HEK293 (cell line): ENCODE measurements at regions of chr5 and their contacts with region 1.

Region 1: GRCh38 chr5:134041570-134042411 is 37.0 kb upstream of the VDAC1 start:
- H3K4me3 ChIP-seq: no peak overlapping the region
- H3K27ac ChIP-seq: no peak overlapping the region
- H3K4me1 ChIP-seq: no peaks in the 10 kb centered on the region
- CTCF ChIP-seq: no peak

Region 2: GRCh38 chr5:134053840-134054338 is 12.1 kb after region 1 on chr5:
- CTCF ChIA-PET with region 1: interaction called, 20 read pairs
- POLR2A ChIA-PET with region 1: no interaction called
- H3K4me3 ChIP-seq: no peak overlapping the region
- H3K27ac ChIP-seq: no peak overlapping the region
- H3K4me1 ChIP-seq: no peaks in the 10 kb centered on the region
- CTCF ChIP-seq: no peak

Region 3: DNA sequence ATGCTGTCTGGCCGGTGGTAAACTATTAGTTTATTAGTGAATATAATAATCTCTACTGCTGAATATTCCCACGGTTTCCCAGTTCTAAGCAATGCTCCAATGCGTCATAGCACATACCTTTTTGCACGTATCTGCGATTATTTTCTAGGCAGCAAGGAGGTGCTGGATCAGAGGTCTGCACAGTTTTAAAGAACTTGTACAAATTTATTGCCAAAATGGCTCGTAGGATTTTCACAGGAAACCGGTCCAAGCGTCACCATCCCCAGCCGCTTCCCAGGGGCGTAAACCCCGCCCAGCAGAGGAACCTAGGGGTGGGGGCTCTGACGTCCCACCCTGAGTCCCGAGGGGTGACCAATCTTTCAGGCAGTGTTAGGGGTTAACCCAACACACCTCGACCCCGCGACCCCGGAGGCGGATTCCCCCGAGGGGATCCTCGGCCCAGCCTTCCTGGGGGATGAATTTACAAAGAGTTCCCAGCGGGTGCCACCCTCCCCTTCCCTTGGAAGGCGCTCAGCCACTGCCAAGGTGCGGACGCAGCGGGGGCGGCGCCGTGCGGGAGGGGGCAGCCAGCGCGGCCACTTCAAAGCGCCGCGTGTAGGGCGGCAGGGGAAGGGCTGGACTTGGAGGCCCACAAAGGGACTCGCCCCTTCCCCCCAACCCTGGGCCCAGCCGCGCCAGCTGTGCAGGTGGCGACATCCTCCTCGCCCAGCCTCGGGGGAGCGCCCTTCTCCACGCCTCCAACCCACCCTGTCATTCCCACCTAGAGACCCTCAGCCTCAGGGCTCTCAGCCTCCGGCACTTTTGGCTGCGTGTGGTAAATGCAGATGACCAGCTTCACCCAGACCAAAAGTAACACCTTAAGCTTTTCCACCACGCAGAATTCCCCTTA is 29.2 kb after region 1 on chr5:
- CTCF ChIA-PET with region 1: interaction called, 21 read pairs
- POLR2A ChIA-PET with region 1: no interaction called
- H3K4me3 ChIP-seq: peak overlapping the region; percentile 32
- H3K27ac ChIP-seq: no peak overlapping the region; the same call in 1 of the 2 replicates
- H3K4me1 ChIP-seq: no peaks in the 10 kb centered on the region
- CTCF ChIP-seq: no peak

Region 4: GRCh38 chr5:134101686-134102439 is 60.1 kb after region 1 on chr5:
- CTCF ChIA-PET with region 1: interaction called, 35 read pairs
- POLR2A ChIA-PET with region 1: no interaction called
- H3K4me3 ChIP-seq: no peak overlapping the region
- H3K27ac ChIP-seq: no peak overlapping the region
- H3K4me1 ChIP-seq: no peaks in the 10 kb centered on the region
- CTCF ChIP-seq: peak; percentile 70; the same call in 1 of the 2 replicates

Region 5: DNA sequence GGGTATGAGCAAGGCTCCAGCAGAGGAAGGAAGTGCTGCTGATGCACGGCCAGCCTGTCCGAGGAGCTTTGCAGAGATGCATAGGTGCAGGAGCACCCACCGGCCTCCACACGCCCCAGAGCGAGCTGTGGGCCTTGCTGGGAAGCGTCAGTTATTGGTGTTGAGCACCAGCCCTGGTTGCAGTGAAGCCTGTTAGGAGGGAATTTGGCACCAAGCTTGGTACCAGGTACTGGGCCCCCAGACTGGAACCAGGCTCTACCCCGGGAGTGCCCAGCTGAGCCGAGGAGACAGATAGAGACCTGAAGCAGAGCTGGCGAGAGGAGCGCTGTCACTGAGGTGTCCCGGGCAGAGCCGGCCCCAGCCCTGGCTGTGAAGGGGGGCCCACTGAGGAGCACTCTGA is 77.9 kb after region 1 on chr5:
- CTCF ChIA-PET with region 1: interaction called, 42 read pairs
- POLR2A ChIA-PET with region 1: no interaction called
- H3K4me3 ChIP-seq: no peak overlapping the region
- H3K27ac ChIP-seq: no peak overlapping the region
- H3K4me1 ChIP-seq: no peaks in the 10 kb centered on the region
- CTCF ChIP-seq: no peak

Region 6: DNA sequence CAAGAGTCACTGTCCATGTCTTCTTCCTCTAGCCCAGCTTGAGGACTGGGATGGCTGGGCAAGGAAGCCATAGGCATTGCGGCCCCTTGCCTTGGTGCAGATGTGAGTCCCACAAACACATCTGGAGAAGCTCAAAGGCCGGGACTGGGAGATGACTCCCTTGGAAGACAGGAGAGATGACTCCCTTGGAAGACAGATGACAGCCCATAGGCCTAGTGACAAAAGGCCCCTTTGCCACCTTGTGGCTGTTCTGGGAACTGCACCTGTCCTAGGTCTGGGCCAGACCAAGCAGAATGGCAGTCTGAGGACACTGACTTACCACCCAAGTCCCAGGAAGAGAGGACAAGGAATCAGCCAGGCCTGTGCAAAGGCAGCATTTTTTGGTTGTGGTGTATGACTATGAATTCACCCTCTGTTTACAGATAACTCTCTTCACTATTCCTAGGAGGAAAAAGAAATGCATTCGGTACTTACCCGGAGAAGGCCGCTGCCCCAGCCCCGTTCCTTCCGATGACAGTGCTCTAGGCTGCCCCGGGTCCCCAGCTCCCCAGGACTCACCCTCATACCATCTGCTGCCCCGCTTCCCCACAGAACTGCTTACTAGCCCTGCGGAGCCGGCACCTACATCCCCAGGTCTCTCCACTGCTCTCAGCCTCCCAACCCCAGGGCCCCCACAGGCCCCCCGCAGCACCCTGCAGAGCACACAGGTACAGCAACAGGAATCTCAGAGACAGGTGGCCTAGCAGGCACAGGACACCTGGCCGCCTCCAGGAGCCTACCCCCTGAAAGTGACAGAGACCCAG is 104.2 kb after region 1 on chr5:
- CTCF ChIA-PET with region 1: interaction called, 196 read pairs
- POLR2A ChIA-PET with region 1: interaction called, 4 read pairs
- H3K4me3 ChIP-seq: no peak overlapping the region
- H3K27ac ChIP-seq: no peak overlapping the region
- H3K4me1 ChIP-seq: peaks cover 9% of the 10 kb centered on the region; the same call in 1 of the 2 replicates
- CTCF ChIP-seq: peak; percentile 83

Region 7: DNA sequence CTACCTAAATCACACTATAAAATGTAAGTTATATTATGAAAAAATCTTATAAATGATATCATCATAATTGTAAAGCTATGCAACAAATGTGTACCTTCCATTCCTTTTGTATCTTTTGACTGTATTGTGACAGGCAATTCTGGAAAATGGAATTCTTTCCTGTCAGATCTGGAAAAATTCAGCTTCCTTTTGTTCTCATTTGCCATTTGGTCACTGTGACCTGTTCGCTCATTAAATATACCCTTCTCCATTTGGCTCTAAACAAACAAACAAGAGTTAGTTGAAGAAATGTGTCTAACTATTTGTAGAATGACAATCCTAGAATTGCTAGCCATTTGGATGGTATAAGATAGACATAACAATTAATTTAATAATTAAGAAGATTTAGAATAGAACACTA is 262.5 kb after region 1 on chr5:
- CTCF ChIA-PET with region 1: interaction called, 10 read pairs
- POLR2A ChIA-PET with region 1: no interaction called
- H3K4me3 ChIP-seq: no peak overlapping the region
- H3K27ac ChIP-seq: no peak overlapping the region
- H3K4me1 ChIP-seq: no peaks in the 10 kb centered on the region
- CTCF ChIP-seq: no peak